Activated naive CD4-positive, alpha-beta T cell treated with anti-CD3 and anti-CD28 coated beads for 36 hours (primary cell): ENCODE measurements at regions of chr16 and their contacts with region 1.

Region 1: GRCh38 chr16:78396046-78396445 is 296.6 kb downstream of the WWOX start:
- DNase-seq: no peak
- H3K4me3 Mint-ChIP-seq: no peak overlapping the region
- H3K27ac Mint-ChIP-seq: no peak overlapping the region
- H3K4me1 Mint-ChIP-seq: no peaks in the 10 kb centered on the region
- H3K27me3 Mint-ChIP-seq: no peaks in the 10 kb centered on the region

Region 2: DNA sequence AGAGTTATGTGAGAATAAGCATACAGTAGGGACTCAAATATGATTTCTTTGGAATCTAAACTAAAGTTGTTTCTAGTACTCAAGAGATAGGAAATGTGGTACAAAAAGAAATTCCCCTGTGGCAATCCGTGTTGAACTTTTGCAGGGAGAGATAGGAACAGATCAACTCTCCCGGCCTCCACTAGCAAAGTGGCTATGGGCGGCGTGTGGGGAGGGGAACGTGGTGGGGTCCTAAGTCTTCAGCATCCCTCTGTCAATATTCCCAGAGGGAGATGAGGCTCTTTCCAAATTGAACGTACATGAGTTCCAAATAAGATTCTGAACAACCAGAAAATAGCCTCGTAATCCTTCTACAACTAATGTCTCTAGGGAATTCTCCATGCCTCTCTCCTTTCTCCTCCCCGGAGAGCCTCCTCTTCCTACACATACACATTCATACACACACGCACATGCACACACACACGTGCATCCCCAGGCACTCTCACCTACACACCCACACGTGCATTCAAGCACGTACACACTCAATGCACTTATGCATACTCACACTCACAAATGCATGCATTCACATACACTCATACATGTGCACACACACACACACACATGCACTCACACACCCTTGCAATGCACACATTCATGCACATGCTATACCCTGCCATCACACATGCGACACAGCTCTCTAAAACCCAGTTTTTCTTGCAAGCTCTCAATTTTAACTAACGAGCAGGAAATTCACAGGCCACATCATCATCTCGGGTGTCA is 959.7 kb after region 1 on chr16:
- CTCF ChIA-PET with region 1: no interaction called
- intact Hi-C with region 1: loop called (anchors 5 kb)
- DNase-seq: no peak
- H3K4me3 Mint-ChIP-seq: no peak overlapping the region
- H3K27ac Mint-ChIP-seq: no peak overlapping the region
- H3K4me1 Mint-ChIP-seq: no peaks in the 10 kb centered on the region
- H3K27me3 Mint-ChIP-seq: no peaks in the 10 kb centered on the region